ENCODE measurements at regions of chr13 and their contacts with region 1.

Region 1: GRCh38 chr13:101452519-101453485 is at the start of gene ITGBL1:
- DNase-seq: peak in 1 of 2 donors; percentile 71
- H3K4me3 ChIP-seq: peak within 1 kb of the TSS; percentile 59 to 77
- H3K27ac ChIP-seq: peak within 1 kb of the TSS; percentile 90 to 95
- H3K4me1 ChIP-seq: peaks cover 3 to 28% of the 10 kb centered on the region in 2 donors
- H3K27me3 ChIP-seq: no peaks in the 10 kb centered on the region
- CTCF ChIP-seq: no peak
- total RNA-seq, gene ITGBL1: 47.1 TPM

Region 2: GRCh38 chr13:101190976-101191375 is 261.8 kb before region 1 on chr13:
- intact Hi-C with region 1: no loop called
- DNase-seq: no peak
- H3K4me3 ChIP-seq: no peak overlapping the region
- H3K27ac ChIP-seq: no peak overlapping the region
- H3K4me1 ChIP-seq: peaks cover 0 to 3% of the 10 kb centered on the region in 2 donors
- H3K27me3 ChIP-seq: no peaks in the 10 kb centered on the region
- CTCF ChIP-seq: no peak

Region 3: DNA sequence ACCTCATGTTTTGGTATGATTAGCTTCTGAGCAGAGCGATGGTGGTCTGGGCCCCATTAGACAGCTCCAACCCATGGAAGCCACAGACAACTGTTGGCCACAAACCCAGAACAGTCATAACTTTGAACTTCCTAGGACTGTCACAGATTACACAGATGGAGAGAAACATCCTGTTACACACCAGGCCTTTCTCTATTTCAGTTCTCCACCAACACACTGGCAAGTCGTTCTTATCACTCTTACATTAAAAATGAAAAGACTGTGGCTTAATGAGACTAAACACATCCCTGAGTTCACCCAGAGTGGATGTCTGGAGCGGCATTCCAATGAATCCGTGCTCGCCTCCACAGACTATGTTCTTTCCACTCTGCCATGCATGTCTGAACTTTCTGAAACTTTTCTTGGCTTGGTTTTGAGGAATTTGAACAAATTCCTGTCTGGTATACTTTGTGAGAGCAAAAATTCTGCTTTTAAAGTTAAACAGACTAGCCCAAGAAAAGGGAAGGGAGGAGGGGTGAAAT is 145.6 kb before region 1 on chr13:
- intact Hi-C with region 1: loop called (anchors 5 kb)
- DNase-seq: peak in 1 of 2 donors; percentile 74
- H3K4me3 ChIP-seq: no peak overlapping the region
- H3K27ac ChIP-seq: peak overlapping the region; percentile 73 to 80
- H3K4me1 ChIP-seq: peaks cover 0 to 32% of the 10 kb centered on the region in 2 donors
- H3K27me3 ChIP-seq: no peaks in the 10 kb centered on the region
- CTCF ChIP-seq: no peak

Region 4: DNA sequence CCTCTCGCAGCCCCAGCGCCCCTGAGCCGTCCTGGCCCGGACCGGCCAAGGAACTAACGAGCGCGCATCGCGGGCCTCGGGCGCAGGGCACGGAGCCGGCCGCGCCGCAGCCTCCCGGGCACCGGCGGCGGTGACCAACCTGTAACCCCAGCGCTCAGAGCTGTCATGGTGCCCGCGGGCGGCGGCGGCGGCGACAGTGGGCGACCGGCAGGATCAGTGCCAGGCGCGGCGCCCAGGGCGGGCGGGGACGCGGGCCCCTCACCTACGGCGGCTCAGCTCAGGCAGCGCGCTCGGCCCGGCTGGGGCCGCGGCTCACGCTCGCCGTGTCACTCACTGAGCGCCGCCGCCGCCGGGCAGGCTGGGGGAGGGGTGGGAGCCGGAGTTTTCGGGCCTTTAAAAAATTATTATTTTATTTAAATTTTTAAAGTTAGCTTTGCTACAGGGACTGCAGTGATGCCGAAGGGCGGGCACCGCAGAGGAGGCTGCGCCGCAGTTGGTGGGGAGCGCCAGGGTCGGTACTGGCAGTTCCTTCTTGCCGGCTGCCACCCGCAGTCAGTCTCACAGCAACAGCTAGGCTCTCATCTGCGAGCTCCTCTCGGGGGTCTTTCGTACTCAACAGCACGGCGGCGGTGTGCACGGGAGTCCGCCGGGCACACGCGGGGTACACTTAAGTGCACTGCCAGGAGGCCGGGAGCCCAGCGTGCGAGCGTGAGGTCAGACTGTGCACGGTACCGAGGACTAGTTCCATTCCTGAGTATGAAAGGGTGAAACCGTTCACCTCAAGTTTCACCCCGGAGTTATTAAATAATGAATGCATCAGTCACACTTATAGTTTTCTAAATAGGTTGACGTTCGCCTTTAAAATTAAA is 36.4 kb before region 1 on chr13 and contains the start of gene NALCN:
- intact Hi-C with region 1: loop called (anchors 2 kb)
- DNase-seq: peak in 1 of 2 donors; percentile 74
- H3K4me3 ChIP-seq: peak within 1 kb of the TSS; percentile 71 to 98
- H3K27ac ChIP-seq: peak within 1 kb of the TSS; percentile 74 to 80
- H3K4me1 ChIP-seq: peaks cover 0 to 3% of the 10 kb centered on the region in 2 donors
- H3K27me3 ChIP-seq: no peaks in the 10 kb centered on the region
- CTCF ChIP-seq: no peak
- total RNA-seq, gene NALCN: 18.5 TPM

Region 5: DNA sequence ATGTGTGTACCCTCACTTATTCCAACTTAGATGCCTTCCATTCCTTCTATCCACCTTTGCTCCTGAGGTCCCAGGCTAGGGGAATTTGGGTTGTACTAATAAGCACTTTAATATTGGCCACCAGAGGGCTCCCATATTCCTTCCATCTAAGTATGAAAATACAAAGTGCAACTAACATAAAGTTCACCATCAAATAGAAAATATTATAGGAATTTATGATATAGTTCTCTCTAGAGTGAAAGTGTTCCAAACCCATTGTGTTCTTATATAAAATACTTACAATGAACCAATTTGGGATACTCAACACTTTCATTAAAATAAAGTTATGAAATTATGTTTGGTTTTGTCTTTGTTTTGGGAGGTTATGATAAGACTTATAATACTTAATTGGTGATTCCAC is 62.0 kb after region 1 on chr13:
- intact Hi-C with region 1: loop called (anchors 5 kb)
- DNase-seq: no peak
- H3K4me3 ChIP-seq: no peak overlapping the region
- H3K27ac ChIP-seq: no peak overlapping the region
- H3K4me1 ChIP-seq: peaks cover 0 to 7% of the 10 kb centered on the region in 2 donors
- H3K27me3 ChIP-seq: no peaks in the 10 kb centered on the region
- CTCF ChIP-seq: peak; percentile 52 to 69 (median 67)

Measured in ascending aorta (tissue), 2 donors.